AG04450 (cell line): ENCODE measurements at regions of chr4 and their contacts with region 1.

Region 1: GRCh38 chr4:168666531-168666930 is 169.7 kb downstream of the PALLD start:
- DNase-seq: no peak
- H3K4me3 ChIP-seq: no peak overlapping the region
- H3K27ac ChIP-seq: no peak overlapping the region
- H3K27me3 ChIP-seq: no peaks in the 10 kb centered on the region
- CTCF ChIP-seq: no peak

Region 2: GRCh38 chr4:168440442-168441264 is 225.9 kb before region 1 on chr4:
- CTCF ChIA-PET with region 1: no interaction called
- POLR2A ChIA-PET with region 1: no interaction called
- DNase-seq: no peak
- H3K4me3 ChIP-seq: no peak overlapping the region
- H3K27ac ChIP-seq: no peak overlapping the region
- H3K27me3 ChIP-seq: no peaks in the 10 kb centered on the region
- CTCF ChIP-seq: no peak

Region 3: GRCh38 chr4:168656055-168656660 is 10.4 kb before region 1 on chr4:
- CTCF ChIA-PET with region 1: no interaction called
- POLR2A ChIA-PET with region 1: interaction called, 10 read pairs
- DNase-seq: peak; percentile 56
- H3K4me3 ChIP-seq: no peak overlapping the region
- H3K27ac ChIP-seq: no peak overlapping the region
- H3K27me3 ChIP-seq: no peaks in the 10 kb centered on the region
- CTCF ChIP-seq: no peak

Region 4: DNA sequence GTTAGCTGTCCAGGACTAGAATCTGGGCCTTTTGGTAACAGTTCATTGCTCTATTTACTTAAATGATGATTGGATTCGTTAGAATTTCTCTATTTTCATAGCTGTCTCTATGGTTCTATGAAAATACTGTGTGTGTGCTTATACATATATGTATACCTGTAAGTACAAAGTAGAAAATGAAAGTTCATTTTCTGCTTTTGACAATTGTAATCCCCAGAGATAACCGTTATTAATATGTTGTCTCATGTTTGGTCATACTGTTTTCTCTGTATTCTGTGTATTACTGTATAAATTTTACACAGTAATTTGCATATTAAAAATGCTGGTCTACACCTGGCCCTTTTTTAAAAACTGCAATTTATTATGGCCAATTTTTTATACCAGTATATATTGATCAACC is 1009.3 kb after region 1 on chr4:
- CTCF ChIA-PET with region 1: no interaction called
- POLR2A ChIA-PET with region 1: no interaction called
- DNase-seq: no peak
- H3K4me3 ChIP-seq: no peak overlapping the region
- H3K27ac ChIP-seq: no peak overlapping the region
- H3K27me3 ChIP-seq: no peaks in the 10 kb centered on the region
- CTCF ChIP-seq: no peak